Lower leg skin (tissue), 4 donors: ENCODE measurements at regions of chr18 and their contacts with region 1.

Region 1: DNA sequence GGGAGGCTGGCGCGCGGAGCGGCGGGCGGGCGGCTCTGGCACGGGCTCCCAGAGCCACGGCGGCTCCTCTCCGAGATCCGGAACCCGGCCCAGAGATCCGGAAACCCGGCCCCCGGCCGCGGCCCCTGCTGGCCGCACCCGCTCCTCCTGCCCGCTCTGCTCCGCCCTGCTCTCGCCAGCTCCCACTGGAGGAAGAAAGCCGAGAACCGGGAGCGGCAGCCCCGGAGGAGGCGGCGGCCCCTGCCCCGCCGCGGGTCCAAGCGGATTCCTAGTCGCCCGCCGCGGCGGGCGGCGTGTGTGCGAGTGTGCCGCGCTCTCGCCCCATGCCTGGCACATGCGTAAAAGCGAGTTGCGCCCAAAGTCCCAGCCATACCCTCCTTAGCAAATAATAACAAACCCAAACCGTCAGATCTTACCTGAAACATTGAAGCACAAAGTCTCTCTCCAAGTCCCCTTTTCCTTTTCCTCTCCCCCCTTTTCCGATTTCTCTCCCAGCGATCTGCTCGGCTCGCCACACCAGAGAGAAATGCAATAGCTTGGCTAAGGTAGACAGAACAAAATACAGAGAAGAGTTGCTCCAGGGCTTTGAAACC is 108.7 kb upstream of the KCTD1 start:
- DNase-seq: peak; percentile 43 to 91
- H3K4me3 ChIP-seq: peak overlapping the region; percentile 63
- CTCF ChIP-seq: no peak
- POLR2A ChIP-seq: no peak

Region 2: DNA sequence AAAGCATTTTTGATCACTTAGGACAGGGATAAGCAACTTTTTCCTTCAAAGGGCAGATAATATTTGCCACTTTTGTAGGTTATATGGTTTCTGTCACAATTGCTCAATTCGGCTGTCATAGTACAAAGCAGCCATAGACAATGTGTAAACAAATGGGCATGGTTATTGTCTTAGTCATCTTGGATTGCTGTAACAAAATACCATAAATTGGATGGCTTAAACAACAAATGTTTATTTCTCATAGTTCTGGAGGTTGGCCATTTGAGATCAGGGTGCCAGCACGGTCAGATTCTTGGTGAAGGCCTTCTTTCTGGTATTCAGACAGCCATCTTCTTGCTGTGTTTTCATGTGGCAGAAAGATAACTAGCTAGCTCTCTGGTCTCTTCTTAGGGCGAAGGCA is 339.6 kb before region 1 on chr18:
- intact Hi-C with region 1: loop called (anchors 10 kb)
- DNase-seq: no peak
- H3K4me3 ChIP-seq: no peak overlapping the region
- CTCF ChIP-seq: no peak
- POLR2A ChIP-seq: no peak

Region 3: GRCh38 chr18:26397019-26397418 is 260.0 kb before region 1 on chr18:
- intact Hi-C with region 1: loop called (anchors 10 kb)
- DNase-seq: no peak
- H3K4me3 ChIP-seq: no peak overlapping the region
- CTCF ChIP-seq: no peak
- POLR2A ChIP-seq: no peak

Region 4: GRCh38 chr18:26719900-26720299 is 62.9 kb after region 1 on chr18:
- intact Hi-C with region 1: no loop called
- DNase-seq: no peak
- H3K4me3 ChIP-seq: no peak overlapping the region
- CTCF ChIP-seq: no peak
- POLR2A ChIP-seq: no peak